OCI-LY7 (cell line): ENCODE measurements at regions of chr4 and their contacts with region 1.

Region 1: DNA sequence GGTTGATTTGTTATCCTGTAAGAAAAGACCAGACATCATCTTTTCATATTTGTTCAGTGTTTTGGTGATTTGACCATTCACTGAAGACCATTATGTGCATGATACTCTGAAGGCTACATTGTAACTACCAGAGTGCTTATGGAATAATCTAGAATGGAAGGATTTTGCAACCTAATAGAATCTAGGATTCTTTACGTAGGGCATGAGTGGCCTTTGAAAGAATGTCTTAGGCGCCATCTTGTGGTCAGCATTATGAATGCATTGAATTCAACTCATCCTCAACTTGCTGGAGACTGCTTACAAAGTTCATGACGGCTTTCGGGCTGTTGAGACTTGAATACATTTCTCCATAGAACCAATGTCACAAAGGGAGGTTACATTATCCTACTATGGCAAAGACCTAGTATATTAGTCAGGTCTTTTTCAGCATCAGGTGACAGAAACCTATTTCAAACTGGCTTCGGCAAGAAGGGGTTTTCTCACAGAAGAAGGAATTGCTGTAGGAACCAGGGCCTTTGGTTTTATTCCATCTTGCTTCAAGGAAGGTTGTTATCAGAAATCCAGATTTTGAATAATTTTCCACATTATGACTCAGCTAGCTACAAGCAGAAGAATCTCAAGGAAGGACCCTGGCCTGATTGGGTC is 104.1 kb downstream of the GPAT3 start:
- DNase-seq: peak; percentile 73
- H3K4me3 ChIP-seq: no peak overlapping the region
- H3K27ac ChIP-seq: no peak overlapping the region
- H3K4me1 ChIP-seq: no peaks in the 10 kb centered on the region
- CTCF ChIP-seq: peak; percentile 95

Region 2: GRCh38 chr4:83074086-83074704 is 565.8 kb before region 1 on chr4:
- CTCF ChIA-PET with region 1: no interaction called
- POLR2A ChIA-PET with region 1: no interaction called
- intact Hi-C with region 1: loop called (anchors 5 kb)
- DNase-seq: peak; percentile 86
- H3K4me3 ChIP-seq: no peak overlapping the region
- H3K27ac ChIP-seq: no peak overlapping the region
- H3K4me1 ChIP-seq: no peaks in the 10 kb centered on the region
- CTCF ChIP-seq: peak; percentile 94

Region 3: GRCh38 chr4:83362492-83363329 is 277.3 kb before region 1 on chr4:
- CTCF ChIA-PET with region 1: no interaction called
- POLR2A ChIA-PET with region 1: no interaction called
- intact Hi-C with region 1: loop called (anchors 1 kb)
- DNase-seq: peak; percentile 63
- H3K4me3 ChIP-seq: no peak overlapping the region
- H3K27ac ChIP-seq: no peak overlapping the region
- H3K4me1 ChIP-seq: peaks cover 20% of the 10 kb centered on the region
- CTCF ChIP-seq: peak; percentile 88

Region 4: GRCh38 chr4:83490876-83491450 is 149.0 kb before region 1 on chr4:
- CTCF ChIA-PET with region 1: no interaction called
- POLR2A ChIA-PET with region 1: no interaction called
- intact Hi-C with region 1: loop called (anchors 2 kb)
- DNase-seq: peak; percentile 54
- H3K4me3 ChIP-seq: no peak overlapping the region
- H3K27ac ChIP-seq: no peak overlapping the region
- H3K4me1 ChIP-seq: peaks cover under 1% of the 10 kb centered on the region
- CTCF ChIP-seq: peak; percentile 98

Region 5: GRCh38 chr4:83503974-83504373 is 136.0 kb before region 1 on chr4:
- CTCF ChIA-PET with region 1: no interaction called
- POLR2A ChIA-PET with region 1: interaction called, 3 read pairs
- intact Hi-C with region 1: loop called (anchors 1 kb)
- DNase-seq: no peak
- H3K4me3 ChIP-seq: no peak overlapping the region
- H3K27ac ChIP-seq: no peak overlapping the region
- H3K4me1 ChIP-seq: peaks cover 13% of the 10 kb centered on the region
- CTCF ChIP-seq: no peak

Region 6: DNA sequence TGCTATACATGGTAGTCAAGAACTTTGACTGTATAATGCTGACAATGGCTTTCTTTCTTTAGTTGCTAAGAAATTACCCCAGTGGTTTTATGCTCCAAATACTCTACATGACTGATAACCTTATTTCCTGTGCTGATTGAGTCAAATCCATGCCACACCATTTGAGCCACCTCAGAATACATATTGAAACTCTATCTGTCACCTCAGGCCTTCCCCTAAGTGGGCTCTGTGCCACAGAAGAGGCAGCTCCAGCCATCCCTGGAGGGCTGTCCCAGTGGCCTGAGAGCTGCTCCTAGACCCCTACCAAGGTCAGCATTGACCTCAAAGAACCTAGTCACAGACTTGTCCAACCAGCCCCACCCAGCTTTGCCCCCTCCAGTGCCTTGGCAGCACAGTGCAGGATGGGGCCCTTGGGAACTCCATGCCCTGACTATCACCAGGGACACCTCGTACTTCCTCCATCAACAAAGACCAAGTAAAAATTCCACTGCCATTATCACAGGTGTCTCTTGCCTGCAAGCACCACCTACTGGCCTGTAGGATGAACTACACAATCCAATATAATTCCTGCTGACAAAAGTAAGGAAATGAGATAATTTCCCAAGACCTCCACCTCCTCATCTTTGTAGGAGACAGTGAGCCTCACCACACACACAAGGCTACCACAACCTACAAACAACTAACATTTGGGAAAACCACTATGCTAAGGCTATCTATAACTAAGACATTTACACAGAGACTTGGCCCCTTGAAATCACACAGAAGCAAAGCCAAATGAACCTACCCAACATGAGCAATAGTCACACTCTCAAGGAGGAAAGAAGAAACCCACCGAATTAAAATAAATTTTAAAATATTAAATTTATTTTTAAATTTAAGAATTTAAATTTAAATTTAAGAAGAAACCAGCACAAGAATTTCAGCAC is 619.2 kb after region 1 on chr4:
- CTCF ChIA-PET with region 1: no interaction called
- POLR2A ChIA-PET with region 1: no interaction called
- intact Hi-C with region 1: loop called (anchors 2 kb)
- DNase-seq: peak; percentile 29
- H3K4me3 ChIP-seq: no peak overlapping the region
- H3K27ac ChIP-seq: no peak overlapping the region
- H3K4me1 ChIP-seq: no peaks in the 10 kb centered on the region
- CTCF ChIP-seq: peak; percentile 86

Region 7: DNA sequence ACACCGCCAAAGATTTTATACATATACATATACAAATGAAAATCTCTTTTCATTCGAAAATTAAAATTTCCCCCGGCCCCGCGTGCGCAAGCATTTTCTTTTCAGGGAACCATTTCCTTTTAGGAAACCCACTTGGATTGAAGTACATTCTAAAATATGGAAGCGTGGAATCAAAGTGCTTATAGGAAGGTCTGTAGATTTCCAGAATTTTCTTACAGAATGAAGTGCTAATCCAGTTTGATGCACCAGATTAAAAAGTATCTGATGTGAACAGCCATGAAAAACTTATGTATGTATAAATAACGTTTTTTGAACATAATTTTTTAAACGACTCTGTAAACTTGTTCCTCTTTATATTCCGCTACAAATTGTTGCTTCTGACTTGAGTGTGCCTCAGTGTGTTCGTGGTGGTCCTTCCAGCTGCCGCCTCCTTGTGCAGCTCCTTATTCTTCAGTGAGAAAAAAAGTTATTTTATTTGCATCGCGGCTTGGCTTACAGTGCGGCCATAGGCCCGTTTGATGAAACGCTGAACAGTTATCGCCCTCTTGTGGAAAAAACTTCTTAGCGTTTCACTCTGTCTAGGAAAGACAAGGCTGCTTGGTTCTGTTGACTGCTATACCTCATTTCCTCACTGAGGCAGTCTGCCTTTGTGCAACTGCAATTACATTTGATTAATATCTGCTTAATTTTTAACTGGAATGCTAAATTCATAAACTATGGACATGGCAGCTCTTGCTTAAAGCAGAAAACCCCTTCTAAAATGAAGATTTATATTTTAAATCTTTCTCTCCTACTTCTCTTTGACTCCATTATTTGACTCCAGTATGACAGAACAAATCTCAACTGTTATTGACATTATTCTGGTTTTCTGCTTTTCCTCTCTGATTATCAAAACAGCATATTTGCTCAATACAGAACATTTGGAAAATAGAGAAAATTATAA is 863.8 kb after region 1 on chr4:
- CTCF ChIA-PET with region 1: no interaction called
- POLR2A ChIA-PET with region 1: no interaction called
- intact Hi-C with region 1: loop called (anchors 5 kb)
- DNase-seq: peak; percentile 63
- H3K4me3 ChIP-seq: no peak overlapping the region
- H3K27ac ChIP-seq: no peak overlapping the region
- H3K4me1 ChIP-seq: no peaks in the 10 kb centered on the region
- CTCF ChIP-seq: peak; percentile 80